Mammary epithelial cell (primary cell): ENCODE measurements at regions of chr19 and their contacts with region 1.

Region 1: GRCh38 chr19:58499021-58499927 is 12.5 kb downstream of the SLC27A5 start:
- DNase-seq: peak; percentile 96
- H3K4me3 ChIP-seq: peak overlapping the region; percentile 58 to 81 (median 63)
- H3K27ac ChIP-seq: peak overlapping the region; percentile 44
- H3K4me1 ChIP-seq: peaks cover 9% of the 10 kb centered on the region
- H3K27me3 ChIP-seq: no peaks in the 10 kb centered on the region
- CTCF ChIP-seq: peak in 1 of 2 donors; percentile 39

Region 2: DNA sequence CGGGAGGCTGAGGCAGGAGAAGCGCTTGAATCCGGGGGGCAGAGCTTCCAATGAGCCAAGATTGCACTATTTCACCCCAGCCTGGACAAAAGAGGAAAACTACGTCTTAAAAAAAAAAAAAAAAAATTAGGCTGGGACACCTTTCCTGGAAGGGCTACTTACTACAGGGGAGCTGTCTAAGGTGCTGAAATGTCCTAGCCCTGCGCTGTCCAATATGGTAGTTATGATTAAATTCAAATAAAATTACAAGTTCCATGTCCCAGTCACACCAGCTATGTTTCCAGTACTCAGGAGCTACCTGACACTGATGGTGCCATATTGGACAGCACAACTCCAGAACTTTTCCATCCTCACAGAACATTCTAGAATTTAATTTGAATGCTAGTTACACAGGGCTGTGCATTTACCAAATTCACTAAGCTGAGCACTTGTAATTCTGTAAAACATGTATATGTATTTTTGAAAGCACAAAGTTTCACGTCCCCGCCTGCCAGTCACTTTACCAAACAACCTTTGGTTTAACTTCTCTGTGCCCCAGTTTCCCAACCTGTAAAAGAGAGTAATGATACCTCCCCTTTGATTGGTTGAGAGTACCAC is 181.7 kb before region 1 on chr19:
- CTCF ChIA-PET with region 1: no interaction called
- dilution Hi-C with region 1: no loop called
- in situ Hi-C with region 1: no loop called
- intact Hi-C with region 1: loop called (anchors 5 kb)
- DNase-seq: no peak
- H3K4me3 ChIP-seq: no peak overlapping the region
- H3K27ac ChIP-seq: no peak overlapping the region
- H3K4me1 ChIP-seq: peaks cover 13% of the 10 kb centered on the region
- H3K27me3 ChIP-seq: no peaks in the 10 kb centered on the region
- CTCF ChIP-seq: no peak

Region 3: DNA sequence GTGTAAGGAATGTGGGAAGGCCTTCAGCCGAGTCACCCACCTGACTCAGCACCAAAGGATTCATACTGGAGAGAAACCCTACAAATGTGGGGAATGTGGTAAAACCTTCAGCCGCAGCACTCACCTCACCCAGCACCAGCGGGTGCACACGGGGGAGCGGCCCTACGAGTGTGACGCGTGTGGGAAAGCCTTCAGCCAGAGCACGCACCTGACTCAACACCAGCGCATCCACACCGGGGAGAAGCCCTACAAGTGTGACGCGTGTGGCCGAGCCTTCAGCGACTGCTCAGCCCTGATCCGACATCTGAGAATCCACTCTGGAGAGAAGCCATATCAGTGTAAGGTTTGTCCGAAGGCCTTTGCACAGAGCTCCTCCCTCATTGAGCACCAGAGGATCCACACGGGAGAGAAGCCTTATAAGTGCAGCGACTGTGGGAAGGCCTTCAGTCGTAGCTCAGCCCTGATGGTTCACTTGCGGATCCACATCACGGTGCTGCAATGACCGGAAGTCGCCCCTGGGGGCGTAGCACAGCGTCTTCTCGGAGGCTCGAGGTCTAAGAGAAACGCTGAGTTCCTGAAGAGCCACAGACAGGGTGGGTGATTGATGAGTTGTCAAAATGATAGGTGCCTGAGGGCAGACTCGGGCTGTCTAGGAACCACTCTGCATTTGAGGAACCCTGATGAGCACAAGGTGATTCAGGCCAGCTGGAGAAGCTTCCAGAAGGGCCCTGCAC is 160.3 kb before region 1 on chr19:
- CTCF ChIA-PET with region 1: no interaction called
- dilution Hi-C with region 1: no loop called
- in situ Hi-C with region 1: no loop called
- intact Hi-C with region 1: no loop called
- DNase-seq: peak; percentile 19
- H3K4me3 ChIP-seq: no peak overlapping the region
- H3K27ac ChIP-seq: no peak overlapping the region
- H3K4me1 ChIP-seq: no peaks in the 10 kb centered on the region
- H3K27me3 ChIP-seq: no peaks in the 10 kb centered on the region
- CTCF ChIP-seq: no peak

Region 4: GRCh38 chr19:58460039-58460438 is 39.2 kb before region 1 on chr19:
- CTCF ChIA-PET with region 1: no interaction called
- dilution Hi-C with region 1: no loop called
- in situ Hi-C with region 1: no loop called
- intact Hi-C with region 1: loop called (anchors 1 kb)
- DNase-seq: peak; percentile 73
- H3K4me3 ChIP-seq: no peak overlapping the region
- H3K27ac ChIP-seq: no peak overlapping the region
- H3K4me1 ChIP-seq: peaks cover 9% of the 10 kb centered on the region
- H3K27me3 ChIP-seq: no peaks in the 10 kb centered on the region
- CTCF ChIP-seq: no peak

Region 5: DNA sequence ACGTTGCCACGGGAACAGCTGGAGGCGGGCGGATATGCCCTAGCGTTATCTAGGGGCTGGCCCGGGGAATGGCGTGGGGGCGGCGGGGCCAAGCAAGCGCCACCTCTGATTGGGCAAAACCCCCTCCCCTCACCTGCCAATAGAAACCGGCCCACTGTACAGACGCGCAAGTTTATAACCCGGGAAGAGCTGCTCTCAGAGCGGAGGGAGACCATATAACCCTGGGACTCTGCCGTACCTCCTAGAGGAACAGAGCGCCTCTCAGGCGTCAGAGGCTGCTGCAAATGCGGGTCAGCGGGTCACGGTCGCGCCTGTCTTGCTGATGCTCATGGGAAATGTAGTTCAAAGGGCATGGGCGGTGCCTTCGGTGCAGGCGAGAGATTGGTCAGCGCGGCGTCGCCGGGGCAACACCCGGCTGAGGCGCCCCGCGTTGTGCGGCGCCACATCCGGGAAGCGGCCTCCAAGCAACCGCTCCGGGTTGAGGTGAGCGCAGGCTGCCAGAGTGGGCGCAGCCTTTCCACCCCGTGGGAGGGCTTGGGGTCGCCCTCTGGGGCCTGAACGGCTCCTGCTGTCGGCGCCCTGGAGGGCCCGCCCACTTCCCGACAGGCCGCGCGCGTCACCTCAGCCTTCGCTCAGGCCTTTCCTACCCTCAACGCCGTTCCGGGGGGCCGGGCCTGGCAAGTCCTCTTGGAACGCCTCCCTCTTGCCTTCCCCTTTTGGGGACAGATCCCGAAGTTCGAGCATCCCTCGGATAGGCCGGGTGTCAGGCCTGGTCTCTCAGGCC is 23.4 kb before region 1 on chr19 and contains the start of gene ZNF446:
- CTCF ChIA-PET with region 1: no interaction called
- dilution Hi-C with region 1: no loop called
- in situ Hi-C with region 1: no loop called
- intact Hi-C with region 1: loop called (anchors 1 kb)
- DNase-seq: peak; percentile 97
- H3K4me3 ChIP-seq: peak within 1 kb of the TSS; percentile 61 to 82 (median 77)
- H3K27ac ChIP-seq: peak within 1 kb of the TSS; percentile 66
- H3K4me1 ChIP-seq: peaks cover 23% of the 10 kb centered on the region
- H3K27me3 ChIP-seq: no peaks in the 10 kb centered on the region
- CTCF ChIP-seq: no peak
- total RNA-seq, gene ZNF446: 6.1 to 9.3 TPM